Panc1 (cell line): ENCODE measurements at regions of chr1 and their contacts with region 1.

Region 1: GRCh38 chr1:232166942-232167341 is 463.0 kb downstream of the SIPA1L2 start:
- DNase-seq: no peak
- ATAC-seq: no peak
- H3K4me3 ChIP-seq: no peak overlapping the region
- H3K27ac ChIP-seq: no peak overlapping the region
- H3K4me1 ChIP-seq: no peaks in the 10 kb centered on the region
- H3K27me3 ChIP-seq: no peaks in the 10 kb centered on the region
- CTCF ChIP-seq: no peak

Region 2: DNA sequence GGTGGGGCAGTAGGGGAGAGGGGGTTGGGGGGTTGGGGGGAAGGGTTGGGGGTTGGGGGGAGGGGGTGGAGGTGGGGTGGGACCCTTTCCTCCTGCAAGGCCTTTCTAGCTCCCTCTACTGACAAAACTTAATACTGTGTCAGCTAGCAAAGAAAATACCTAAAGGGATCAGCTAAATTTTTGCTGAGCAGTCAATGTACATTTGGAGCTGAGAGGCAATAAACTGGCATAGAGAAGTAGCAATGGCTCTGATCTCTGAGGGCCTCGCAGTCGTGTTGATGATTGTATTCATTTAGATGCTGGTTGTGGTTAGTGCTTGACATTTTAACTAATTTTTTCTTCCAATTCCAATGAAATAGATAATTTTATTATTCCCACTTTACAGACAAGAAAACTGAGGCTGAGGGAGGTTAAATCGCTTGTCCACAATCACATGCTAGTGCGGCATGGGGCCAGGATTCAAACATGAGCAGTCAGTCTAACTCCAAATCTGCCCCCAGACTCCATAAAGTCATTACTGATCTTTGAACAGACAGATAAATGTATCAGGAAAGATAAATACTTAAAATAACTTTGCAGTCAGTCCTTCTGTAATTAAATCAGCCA is 183.3 kb before region 1 on chr1:
- CTCF ChIA-PET with region 1: interaction called, 13 read pairs
- POLR2A ChIA-PET with region 1: no interaction called
- in situ Hi-C with region 1: no loop called
- intact Hi-C with region 1: no loop called
- DNase-seq: no peak
- ATAC-seq: no peak
- H3K4me3 ChIP-seq: no peak overlapping the region
- H3K27ac ChIP-seq: no peak overlapping the region
- H3K4me1 ChIP-seq: no peaks in the 10 kb centered on the region
- H3K27me3 ChIP-seq: no peaks in the 10 kb centered on the region
- CTCF ChIP-seq: peak; percentile 9; the same call in 1 of the 2 replicates